Activated T-helper 1 cell treated with anti-CD3 and anti-CD28 coated beads, Interleukin-12 subunit alpha, Interleukin-12 subunit beta, Interleukin-2, Interleukin-4 antibody, amounts not matched to agents 30 ng/mL and 10 ng/mL and 1 ng/mL, durations not matched to agents 14 hours and 24 hours and 36 hours (primary cell): ENCODE measurements at regions of chr7 and their contacts with region 1.

Region 1: DNA sequence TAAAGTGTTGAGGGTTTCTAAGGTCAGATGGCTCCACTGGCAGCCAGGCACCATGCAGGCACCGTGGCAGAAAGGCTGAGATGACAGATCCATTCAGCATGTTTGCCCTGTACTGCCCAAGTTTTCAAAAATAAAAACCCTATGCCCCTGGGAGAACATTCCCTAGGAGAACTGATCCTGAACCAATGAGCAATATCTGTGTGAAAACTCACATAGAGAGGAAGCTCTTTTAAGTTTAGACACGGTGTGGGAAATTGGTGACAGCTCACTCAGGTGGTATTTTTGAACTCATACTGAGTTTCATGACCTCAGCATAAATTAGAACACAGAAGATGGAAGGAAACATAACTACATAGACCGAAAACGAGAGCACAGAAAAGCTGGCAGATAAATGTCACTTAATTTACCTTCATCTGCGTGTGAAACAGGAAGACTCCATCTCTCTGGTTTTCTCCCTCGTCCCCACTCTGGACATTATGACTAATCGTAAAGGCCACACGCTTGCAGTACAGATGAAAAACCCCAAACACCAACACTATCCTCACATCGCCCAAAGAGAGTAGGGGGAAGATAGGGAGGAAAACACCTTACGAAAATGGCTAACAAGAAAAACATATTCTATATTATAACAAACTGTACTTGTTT is 127.8 kb downstream of the ICA1 start:
- DNase-seq: peak; percentile 46
- H3K4me3 Mint-ChIP-seq: peak overlapping the region; percentile 10
- H3K27ac Mint-ChIP-seq: peak overlapping the region; percentile 70
- H3K4me1 Mint-ChIP-seq: peaks cover 63% of the 10 kb centered on the region
- H3K27me3 Mint-ChIP-seq: no peaks in the 10 kb centered on the region

Region 2: DNA sequence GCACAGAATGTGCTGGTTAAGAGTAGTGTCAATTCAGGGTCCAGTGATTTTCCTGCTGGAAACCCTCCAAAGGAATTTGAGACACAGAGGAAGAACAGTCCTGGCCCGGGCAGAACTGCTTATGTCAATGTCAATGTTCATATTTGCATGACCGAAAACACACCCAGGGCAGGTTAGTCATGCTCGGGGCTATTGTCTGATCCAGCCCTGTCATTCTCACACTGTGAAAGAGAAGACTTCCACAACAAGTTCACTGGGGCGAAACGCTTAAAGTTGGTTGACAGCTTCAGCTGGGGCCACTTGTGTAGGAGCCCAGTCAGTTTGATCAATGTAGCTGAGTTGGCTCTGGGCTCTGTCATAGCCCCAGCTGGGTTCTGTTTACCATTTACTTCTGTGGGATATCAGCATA is 812.5 kb before region 1 on chr7:
- intact Hi-C with region 1: no loop called
- DNase-seq: no peak
- H3K4me3 Mint-ChIP-seq: no peak overlapping the region
- H3K27ac Mint-ChIP-seq: no peak overlapping the region
- H3K4me1 Mint-ChIP-seq: no peaks in the 10 kb centered on the region
- H3K27me3 Mint-ChIP-seq: peaks cover 1% of the 10 kb centered on the region

Region 3: GRCh38 chr7:7566651-7567611 is 567.3 kb before region 1 on chr7 and contains the start of gene MIOS:
- intact Hi-C with region 1: loop called (anchors 2 kb)
- DNase-seq: peak; percentile 80
- H3K4me3 Mint-ChIP-seq: peak within 1 kb of the TSS; percentile 88
- H3K27ac Mint-ChIP-seq: peak within 1 kb of the TSS; percentile 73
- H3K4me1 Mint-ChIP-seq: peaks cover 35% of the 10 kb centered on the region
- H3K27me3 Mint-ChIP-seq: no peaks in the 10 kb centered on the region
- total RNA-seq, gene MIOS: 29.6 and 31.6 TPM in 2 replicates

Region 4: DNA sequence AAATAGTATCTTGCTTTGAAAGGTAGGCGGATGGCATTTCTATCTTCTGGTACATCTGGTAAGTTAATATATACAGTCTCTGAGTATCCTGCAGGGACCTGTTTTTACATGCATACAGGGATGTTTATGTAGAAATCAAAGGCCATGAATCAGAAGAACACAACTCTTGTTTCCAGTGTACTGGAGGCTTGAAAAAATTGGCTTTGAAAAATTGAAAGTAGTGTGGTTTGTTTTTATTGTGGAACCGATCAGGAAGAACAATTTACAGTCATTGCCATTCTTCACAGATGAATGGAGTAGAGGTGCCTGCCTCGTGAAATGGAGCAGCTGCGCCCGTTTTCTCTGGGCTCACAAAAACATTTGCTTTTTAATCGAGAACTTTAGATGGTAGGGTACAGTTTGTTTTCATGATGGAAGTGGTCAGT is 361.8 kb before region 1 on chr7:
- intact Hi-C with region 1: loop called (anchors 1 kb)
- DNase-seq: no peak
- H3K4me3 Mint-ChIP-seq: peak overlapping the region; percentile 54
- H3K27ac Mint-ChIP-seq: peak overlapping the region; percentile 42
- H3K4me1 Mint-ChIP-seq: peaks cover 23% of the 10 kb centered on the region
- H3K27me3 Mint-ChIP-seq: peaks cover 3% of the 10 kb centered on the region

Region 5: DNA sequence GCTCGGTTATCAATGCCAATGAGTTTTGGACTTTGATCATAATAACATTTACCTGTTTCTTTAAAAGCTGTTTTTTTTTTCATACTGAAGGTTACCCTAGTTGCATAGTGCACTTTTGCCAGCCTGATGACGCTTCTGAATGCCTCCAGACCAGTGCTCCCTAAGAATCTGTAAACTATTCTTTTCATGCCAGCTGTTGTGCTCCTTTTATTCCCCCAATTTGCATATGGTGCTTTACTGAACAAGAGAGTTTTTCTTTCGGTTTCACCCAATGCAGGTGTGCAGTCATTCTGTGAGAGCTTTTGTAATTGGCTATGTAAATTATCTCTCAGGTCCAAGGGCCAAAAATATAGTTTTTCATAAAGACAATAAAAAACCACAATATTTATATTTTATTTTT is 213.7 kb before region 1 on chr7:
- intact Hi-C with region 1: loop called (anchors 1 kb)
- DNase-seq: peak; percentile 12
- H3K4me3 Mint-ChIP-seq: no peak overlapping the region
- H3K27ac Mint-ChIP-seq: no peak overlapping the region
- H3K4me1 Mint-ChIP-seq: peaks cover 44% of the 10 kb centered on the region
- H3K27me3 Mint-ChIP-seq: peaks cover 3% of the 10 kb centered on the region

Region 6: DNA sequence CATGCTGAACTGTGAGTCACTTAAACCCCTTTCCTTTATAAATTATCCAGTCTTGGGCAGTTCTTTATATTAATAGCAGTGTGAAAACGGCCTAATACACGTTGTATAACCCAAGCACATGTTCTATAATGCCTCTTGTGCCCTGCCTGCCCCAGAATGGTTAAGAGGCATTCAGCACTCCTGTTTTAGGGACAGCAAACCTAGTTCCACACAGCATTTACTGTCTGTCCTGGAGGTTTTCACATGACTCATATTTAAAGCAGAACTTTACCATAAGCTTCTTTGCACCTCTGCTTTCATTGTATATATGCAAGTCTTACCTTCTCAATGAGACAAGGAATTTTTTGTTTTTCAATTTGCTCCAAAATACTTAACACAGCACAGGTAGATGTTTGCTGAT is 17.0 kb before region 1 on chr7:
- intact Hi-C with region 1: loop called (anchors 1 kb)
- DNase-seq: no peak
- H3K4me3 Mint-ChIP-seq: peak overlapping the region; percentile 9
- H3K27ac Mint-ChIP-seq: no peak overlapping the region
- H3K4me1 Mint-ChIP-seq: peaks cover 91% of the 10 kb centered on the region
- H3K27me3 Mint-ChIP-seq: no peaks in the 10 kb centered on the region

Region 7: GRCh38 chr7:8197994-8198698 is 63.9 kb after region 1 on chr7:
- intact Hi-C with region 1: loop called (anchors 1 kb)
- DNase-seq: peak; percentile 51
- H3K4me3 Mint-ChIP-seq: peak overlapping the region; percentile 0
- H3K27ac Mint-ChIP-seq: peak overlapping the region; percentile 11
- H3K4me1 Mint-ChIP-seq: peaks cover 66% of the 10 kb centered on the region
- H3K27me3 Mint-ChIP-seq: peaks cover 14% of the 10 kb centered on the region

Region 8: DNA sequence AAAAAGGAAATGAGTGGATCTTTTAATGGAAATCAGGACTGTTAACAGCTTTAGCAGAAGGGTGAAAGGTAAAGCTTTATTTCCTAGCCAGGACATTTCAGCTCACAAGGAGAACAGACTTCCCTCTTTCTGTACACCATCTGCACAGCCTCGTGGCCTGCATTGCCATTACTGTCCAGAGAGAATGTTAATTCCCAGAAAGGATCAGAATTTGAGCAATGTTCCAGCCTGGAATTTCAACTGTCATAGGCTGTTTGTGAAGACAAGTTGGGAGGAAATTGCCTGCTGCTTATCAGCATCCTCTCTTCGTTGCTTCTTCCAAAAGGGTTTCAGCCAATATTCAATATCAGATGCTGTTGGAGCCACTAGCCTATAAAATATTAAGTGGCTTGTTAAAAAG is 321.2 kb after region 1 on chr7:
- intact Hi-C with region 1: no loop called
- DNase-seq: no peak
- H3K4me3 Mint-ChIP-seq: no peak overlapping the region
- H3K27ac Mint-ChIP-seq: no peak overlapping the region
- H3K4me1 Mint-ChIP-seq: no peaks in the 10 kb centered on the region
- H3K27me3 Mint-ChIP-seq: peaks cover 4% of the 10 kb centered on the region